ENCODE measurements at regions of chr20 and their contacts with region 1.

Region 1: DNA sequence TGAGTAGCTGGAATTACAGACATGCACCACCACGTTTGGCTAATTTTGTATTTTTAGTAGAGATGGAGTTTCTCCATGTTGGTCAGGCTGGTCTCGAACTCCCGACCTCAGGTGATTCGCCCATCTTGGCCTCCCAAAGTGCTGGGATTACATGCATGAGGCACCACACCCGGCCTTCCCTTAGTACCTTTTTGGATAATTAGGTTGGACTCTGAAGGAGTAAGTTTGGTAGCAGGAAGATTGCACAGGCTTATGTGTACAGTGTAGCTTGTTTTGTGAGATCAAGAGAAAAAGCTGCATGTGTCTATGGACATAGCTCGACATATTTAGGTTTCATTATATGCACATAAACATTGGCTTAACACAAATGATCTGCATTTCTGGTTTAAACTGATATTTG is 116.8 kb downstream of the NCOA3 start:
- DNase-seq: no peak
- H3K4me3 ChIP-seq: no peak overlapping the region
- H3K27ac ChIP-seq: no peak overlapping the region
- H3K4me1 ChIP-seq: peaks cover 3% of the 10 kb centered on the region
- H3K27me3 ChIP-seq: no peaks in the 10 kb centered on the region
- CTCF ChIP-seq: no peak

Region 2: GRCh38 chr20:47272893-47273590 is 345.4 kb before region 1 on chr20:
- CTCF ChIA-PET with region 1: interaction called, 5 read pairs
- POLR2A ChIA-PET with region 1: no interaction called
- intact Hi-C with region 1: loop called (anchors 5 kb)
- DNase-seq: peak; percentile 74
- H3K4me3 ChIP-seq: no peak overlapping the region
- H3K27ac ChIP-seq: no peak overlapping the region
- H3K4me1 ChIP-seq: peaks cover 13% of the 10 kb centered on the region
- H3K27me3 ChIP-seq: no peaks in the 10 kb centered on the region
- CTCF ChIP-seq: peak; percentile 83

Region 3: GRCh38 chr20:47521059-47521808 is 97.2 kb before region 1 on chr20:
- CTCF ChIA-PET with region 1: interaction called, 10 read pairs
- POLR2A ChIA-PET with region 1: no interaction called
- intact Hi-C with region 1: no loop called
- DNase-seq: no peak
- H3K4me3 ChIP-seq: no peak overlapping the region
- H3K27ac ChIP-seq: no peak overlapping the region
- H3K4me1 ChIP-seq: no peaks in the 10 kb centered on the region
- H3K27me3 ChIP-seq: no peaks in the 10 kb centered on the region
- CTCF ChIP-seq: peak; percentile 30; the same call in 1 of the 2 replicates

Measured in A673 (cell line).